Calu3 (cell line): ENCODE measurements at regions of chr6 and their contacts with region 1.

Region 1: DNA sequence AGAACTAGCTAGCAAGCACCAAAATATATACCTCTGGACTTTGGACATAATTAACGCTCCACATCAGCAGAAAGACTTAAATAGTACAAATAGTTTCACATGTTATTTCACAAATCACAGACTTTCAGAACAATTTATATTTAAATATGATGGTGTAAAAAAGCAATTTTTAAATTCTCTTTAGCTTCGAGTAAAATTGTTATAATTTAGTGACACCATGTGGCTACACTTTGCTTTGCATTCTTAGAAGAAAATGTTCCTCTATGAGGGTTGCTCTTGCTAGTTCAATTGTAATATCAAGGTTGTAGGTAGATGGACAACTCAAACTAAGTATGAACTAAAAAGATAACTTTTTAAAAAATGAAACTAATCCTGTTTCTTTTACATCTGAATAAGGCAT is 69.0 kb downstream of the BTBD9 start:
- DNase-seq: no peak
- H3K4me3 Mint-ChIP-seq: no peak overlapping the region
- H3K27ac Mint-ChIP-seq: no peak overlapping the region
- H3K4me1 Mint-ChIP-seq: no peaks in the 10 kb centered on the region
- H3K27me3 Mint-ChIP-seq: no peaks in the 10 kb centered on the region
- CTCF ChIP-seq: no peak

Region 2: DNA sequence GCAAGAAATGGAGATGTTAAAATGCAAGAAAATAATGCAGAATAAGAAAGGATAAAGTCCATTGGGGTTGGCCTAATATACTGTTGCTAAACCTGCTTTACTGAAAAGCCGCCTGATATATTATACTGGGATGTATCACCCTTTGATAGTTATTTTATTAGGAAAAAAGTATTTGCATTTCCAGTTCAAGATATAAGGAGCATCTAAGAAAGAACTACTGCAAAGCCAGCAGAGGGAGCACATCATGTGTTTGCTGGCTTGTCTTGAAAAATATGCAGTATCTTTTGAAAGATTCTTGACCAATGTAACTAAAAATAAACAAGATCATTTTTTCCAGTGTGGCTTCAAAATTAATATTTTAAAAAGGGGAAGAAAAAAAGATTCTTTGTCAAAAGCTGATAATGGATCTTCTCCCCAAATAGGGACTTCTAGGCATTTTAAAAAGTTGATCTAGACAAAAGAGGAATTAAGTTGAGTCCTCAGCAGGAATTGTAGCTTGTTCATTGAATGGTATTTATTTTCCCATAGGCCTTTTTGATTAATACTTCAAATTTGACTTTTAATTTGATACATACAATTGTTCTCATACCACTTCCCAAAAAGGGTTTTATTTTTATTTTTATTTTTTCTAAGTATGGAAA is 536.4 kb before region 1 on chr6:
- CTCF ChIA-PET with region 1: no interaction called
- intact Hi-C with region 1: loop called (anchors 10 kb)
- DNase-seq: no peak
- H3K4me3 Mint-ChIP-seq: no peak overlapping the region
- H3K27ac Mint-ChIP-seq: no peak overlapping the region
- H3K4me1 Mint-ChIP-seq: peaks cover 27% of the 10 kb centered on the region
- H3K27me3 Mint-ChIP-seq: no peaks in the 10 kb centered on the region
- CTCF ChIP-seq: peak; percentile 25

Region 3: DNA sequence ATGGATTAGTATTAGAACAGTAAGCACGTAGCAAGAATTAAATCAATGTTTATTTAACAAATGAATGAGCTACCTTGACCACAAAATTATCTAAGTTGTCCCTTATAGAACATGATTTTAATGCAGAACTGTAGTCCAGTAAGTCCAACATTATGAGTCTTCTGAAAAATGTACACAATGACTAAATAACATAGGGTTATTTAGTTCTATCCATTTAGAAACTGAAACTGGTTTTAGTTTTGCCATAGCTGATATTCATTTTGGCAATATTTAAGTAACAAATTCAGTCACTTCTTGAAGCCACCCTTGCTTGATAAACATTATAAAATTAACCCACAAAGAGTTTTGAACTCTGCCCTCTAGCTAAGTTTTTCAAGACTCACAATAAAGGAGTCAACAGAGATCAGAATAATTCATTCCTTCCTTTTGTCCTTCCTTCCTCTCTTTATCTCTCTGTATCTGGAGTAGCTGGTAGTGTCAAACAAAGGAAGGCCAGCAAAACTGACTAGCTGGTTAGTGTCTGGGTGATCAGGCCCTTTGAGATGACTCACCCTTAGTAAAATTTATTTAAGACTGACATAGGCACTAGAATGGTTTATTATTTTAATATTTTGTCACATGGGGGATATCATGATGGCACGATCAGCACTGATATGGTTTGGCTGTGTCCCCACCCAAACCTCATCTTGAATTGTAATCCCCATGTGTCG is 46.2 kb before region 1 on chr6:
- CTCF ChIA-PET with region 1: no interaction called
- intact Hi-C with region 1: loop called (anchors 1 kb)
- DNase-seq: no peak
- H3K4me3 Mint-ChIP-seq: no peak overlapping the region
- H3K27ac Mint-ChIP-seq: no peak overlapping the region
- H3K4me1 Mint-ChIP-seq: no peaks in the 10 kb centered on the region
- H3K27me3 Mint-ChIP-seq: no peaks in the 10 kb centered on the region
- CTCF ChIP-seq: no peak